Left cardiac atrium (tissue), 4 donors: ENCODE measurements at regions of chr17 and their contacts with region 1.

Region 1: GRCh38 chr17:81553018-81553615 is 964 bp upstream of the FAAP100 start:
- DNase-seq: peak; percentile 82
- ATAC-seq: peak; percentile 71

Region 2: GRCh38 chr17:81514739-81515529 is 38.2 kb before region 1 on chr17:
- intact Hi-C with region 1: loop called in 1 of 2 experiments (anchors 5 kb)
- DNase-seq: peak; percentile 89
- ATAC-seq: peak; percentile 39 to 48